ENCODE measurements at regions of chr22 and their contacts with region 1.

Region 1: DNA sequence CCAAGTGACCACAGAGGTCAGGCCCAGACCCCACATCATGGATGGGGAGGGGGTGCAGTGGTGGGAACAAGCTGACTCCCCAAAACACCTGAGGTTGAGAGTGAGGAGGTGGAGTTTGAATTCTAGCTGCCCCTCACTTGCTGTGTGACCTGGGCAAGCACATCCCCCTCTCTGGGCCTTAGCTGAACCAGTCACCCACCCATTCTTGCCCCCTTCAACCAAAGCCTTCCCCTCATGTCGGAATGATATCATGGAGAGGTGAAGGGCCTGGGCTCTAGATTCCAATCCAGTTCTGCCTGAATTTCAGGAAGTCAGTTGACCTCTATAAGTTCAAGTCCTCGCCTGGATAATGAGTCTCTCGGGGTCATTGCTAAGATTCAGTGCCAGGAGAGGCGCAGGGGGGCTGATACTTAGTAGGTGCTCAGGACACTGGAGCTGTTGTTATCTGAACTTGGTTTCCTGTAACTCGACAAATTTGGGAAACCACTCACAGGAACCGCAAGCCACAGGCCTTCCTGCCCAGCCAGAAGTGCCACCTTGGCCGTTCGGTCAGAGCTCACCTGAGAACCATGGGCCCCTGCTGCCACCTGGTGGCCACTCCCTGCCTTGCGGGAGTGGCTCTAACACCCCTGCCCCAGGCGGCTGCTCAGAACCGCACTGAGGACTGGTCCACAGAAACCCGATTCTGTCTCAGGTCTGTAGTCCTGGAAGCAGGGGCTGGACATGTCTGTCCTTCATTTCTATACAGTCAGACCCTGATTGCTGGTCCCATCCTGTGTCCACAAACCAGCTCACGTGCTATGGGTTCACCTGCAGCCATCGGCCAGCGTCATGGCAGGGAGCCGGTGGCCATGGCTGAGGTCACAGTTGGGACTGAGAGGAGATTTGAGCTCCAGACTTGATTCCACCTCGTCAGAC is 6.9 kb downstream of the CDC42EP1 start:
- DNase-seq: peak; percentile 58
- H3K4me3 ChIP-seq: no peak overlapping the region
- H3K27ac ChIP-seq: peak overlapping the region; percentile 0
- H3K4me1 ChIP-seq: peaks cover 43% of the 10 kb centered on the region
- H3K27me3 ChIP-seq: no peaks in the 10 kb centered on the region
- CTCF ChIP-seq: peak; percentile 83 to 93
- POLR2A ChIP-seq: peak; percentile 2

Region 2: GRCh38 chr22:37538590-37539357 is 28.4 kb before region 1 on chr22:
- CTCF ChIA-PET with region 1: interaction called, 977 read pairs
- POLR2A ChIA-PET with region 1: interaction called, 3 read pairs
- dilution Hi-C with region 1: no loop called
- intact Hi-C with region 1: loop called (anchors 1 kb)
- DNase-seq: peak; percentile 91
- H3K4me3 ChIP-seq: no peak overlapping the region
- H3K27ac ChIP-seq: no peak overlapping the region
- H3K4me1 ChIP-seq: peaks cover 3% of the 10 kb centered on the region
- H3K27me3 ChIP-seq: no peaks in the 10 kb centered on the region
- CTCF ChIP-seq: peak; percentile 95 to 98
- POLR2A ChIP-seq: no peak

Region 3: GRCh38 chr22:37544955-37545699 is 22.0 kb before region 1 on chr22:
- CTCF ChIA-PET with region 1: interaction called, 977 read pairs
- POLR2A ChIA-PET with region 1: interaction called, 17 read pairs
- dilution Hi-C with region 1: no loop called
- intact Hi-C with region 1: loop called (anchors 1 kb)
- DNase-seq: peak; percentile 80
- H3K4me3 ChIP-seq: no peak overlapping the region
- H3K27ac ChIP-seq: peak overlapping the region; percentile 91
- H3K4me1 ChIP-seq: peaks cover 22% of the 10 kb centered on the region
- H3K27me3 ChIP-seq: no peaks in the 10 kb centered on the region
- CTCF ChIP-seq: peak; percentile 88 to 91
- POLR2A ChIP-seq: no peak